Head of caudate nucleus (tissue), 42 donors: ENCODE measurements at regions of chr1 and their contacts with region 1.

Region 1: DNA sequence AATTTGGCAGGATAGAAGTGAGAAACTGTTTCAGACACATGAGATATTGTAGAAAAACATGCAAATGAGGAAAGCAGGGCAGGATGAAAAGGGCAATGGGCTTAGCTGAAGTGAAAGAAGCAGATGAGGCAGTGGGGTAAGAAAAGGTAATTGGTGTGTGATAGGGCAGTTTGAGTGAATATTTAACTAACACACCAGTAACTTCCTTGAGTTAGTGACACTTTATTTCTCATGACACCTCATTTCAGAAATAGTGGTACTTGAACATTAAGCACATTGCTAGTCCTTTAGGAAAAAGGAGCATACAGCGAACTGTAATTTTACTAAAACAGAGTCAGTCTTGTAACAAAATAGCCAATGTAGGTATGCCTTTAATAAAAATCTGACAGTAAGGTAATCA is 415.0 kb downstream of the DPYD start:
- DNase-seq: no peak

Region 2: DNA sequence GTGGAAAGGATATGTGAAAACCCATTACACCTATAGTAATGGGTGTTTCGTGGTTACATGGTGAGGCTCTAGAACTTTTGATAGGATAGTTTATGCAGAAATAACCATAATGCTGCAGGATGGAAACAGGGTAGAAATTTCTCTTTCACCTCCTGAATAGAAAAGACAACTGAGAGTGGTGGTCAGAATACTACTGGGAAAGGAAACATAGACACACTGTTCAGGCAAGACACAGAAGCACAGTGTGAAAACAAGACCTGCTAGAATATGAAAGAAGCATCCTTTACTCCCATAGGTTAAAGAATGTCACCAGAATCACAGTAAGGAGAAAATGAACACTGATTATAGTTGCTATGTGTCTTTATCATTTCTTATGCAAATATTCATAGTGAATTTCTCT is 81.6 kb before region 1 on chr1:
- intact Hi-C with region 1: loop called (anchors 10 kb)
- DNase-seq: no peak

Region 3: DNA sequence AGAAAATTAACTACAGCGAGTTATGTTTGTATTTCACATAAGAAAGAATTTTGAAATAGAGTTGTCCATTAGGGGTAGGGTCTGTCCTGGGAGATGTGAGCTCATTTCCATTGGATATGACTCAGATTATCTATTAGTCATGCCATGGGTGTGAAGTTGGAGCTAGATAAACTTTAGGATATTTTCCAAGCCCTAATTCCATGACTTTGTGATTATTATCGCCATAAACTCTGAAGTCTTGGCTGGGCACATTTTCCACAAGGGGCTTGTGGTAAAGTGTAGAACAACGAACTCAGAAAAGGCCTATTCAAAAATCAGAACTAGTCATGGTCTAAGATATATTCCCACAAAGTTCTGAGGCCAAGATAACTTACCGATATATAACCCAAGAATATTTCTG is 18.4 kb after region 1 on chr1:
- intact Hi-C with region 1: no loop called
- DNase-seq: no peak